B cell (primary cell): ENCODE measurements at regions of chr1 and their contacts with region 1.

Region 1: GRCh38 chr1:64906447-64906846 is 59.9 kb downstream of the JAK1 start:
- DNase-seq: no peak
- ATAC-seq: no peak
- H3K4me3 ChIP-seq: no peak overlapping the region
- H3K4me3 Mint-ChIP-seq: peak overlapping the region; percentile 4
- H3K27ac ChIP-seq: no peak overlapping the region
- H3K27ac Mint-ChIP-seq: peak overlapping the region; percentile 34
- H3K4me1 ChIP-seq: peaks cover 30 to 50% of the 10 kb centered on the region in 2 donors
- H3K4me1 Mint-ChIP-seq: peaks cover 87% of the 10 kb centered on the region
- H3K27me3 ChIP-seq: no peaks in the 10 kb centered on the region
- H3K27me3 Mint-ChIP-seq: no peaks in the 10 kb centered on the region
- CTCF ChIP-seq: no peak

Region 2: DNA sequence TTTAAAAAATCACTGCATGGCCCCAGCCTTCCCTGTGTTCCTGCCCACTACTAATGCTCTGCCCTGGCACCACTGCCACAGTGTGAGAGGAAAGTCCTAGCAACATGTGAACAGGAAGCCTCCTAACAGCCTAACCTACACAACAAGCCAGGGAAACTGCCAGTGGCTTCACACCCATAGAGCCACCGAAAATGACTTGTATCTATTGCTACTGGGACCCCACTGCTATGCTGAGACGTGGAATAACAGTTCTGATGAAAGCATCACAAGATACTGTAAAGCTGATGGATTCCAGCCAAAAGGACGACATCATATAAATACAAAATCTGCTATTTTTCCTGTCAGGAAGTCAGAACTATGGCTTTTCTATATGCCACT is 15.0 kb before region 1 on chr1:
- CTCF ChIA-PET with region 1: interaction called, 3 read pairs
- POLR2A ChIA-PET with region 1: no interaction called
- intact Hi-C with region 1: loop called (anchors 1 kb)
- DNase-seq: no peak
- ATAC-seq: no peak
- H3K4me3 ChIP-seq: no peak overlapping the region
- H3K4me3 Mint-ChIP-seq: peak overlapping the region; percentile 54
- H3K27ac ChIP-seq: no peak overlapping the region
- H3K27ac Mint-ChIP-seq: no peak overlapping the region
- H3K4me1 ChIP-seq: peaks cover 63 to 86% of the 10 kb centered on the region in 2 donors
- H3K4me1 Mint-ChIP-seq: peaks cover 91% of the 10 kb centered on the region
- H3K27me3 ChIP-seq: no peaks in the 10 kb centered on the region
- H3K27me3 Mint-ChIP-seq: no peaks in the 10 kb centered on the region
- CTCF ChIP-seq: no peak

Region 3: DNA sequence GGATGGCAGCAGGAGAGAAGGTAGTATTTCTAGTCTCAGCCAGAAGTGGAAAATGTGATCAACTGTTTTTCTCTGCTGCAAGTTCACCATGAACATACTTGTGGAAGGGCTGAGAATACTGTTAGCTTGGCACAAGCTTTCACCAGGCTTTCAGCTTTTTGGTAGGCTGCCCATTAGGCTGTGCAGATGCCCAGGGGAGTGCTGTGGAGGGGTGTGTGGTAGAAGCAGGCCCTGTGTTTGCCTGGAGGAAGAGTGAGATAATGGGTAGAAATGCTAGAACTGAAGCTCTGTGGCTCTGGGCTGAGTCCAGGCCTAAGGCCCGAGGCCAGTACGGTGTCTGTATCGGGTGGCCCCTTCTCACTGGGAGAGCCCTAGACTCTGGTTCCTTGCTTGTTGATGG is 412.7 kb after region 1 on chr1:
- CTCF ChIA-PET with region 1: no interaction called
- POLR2A ChIA-PET with region 1: no interaction called
- intact Hi-C with region 1: no loop called
- DNase-seq: no peak
- ATAC-seq: no peak
- H3K4me3 ChIP-seq: no peak overlapping the region
- H3K4me3 Mint-ChIP-seq: no peak overlapping the region
- H3K27ac ChIP-seq: no peak overlapping the region
- H3K27ac Mint-ChIP-seq: no peak overlapping the region
- H3K4me1 ChIP-seq: no peaks in the 10 kb centered on the region
- H3K4me1 Mint-ChIP-seq: no peaks in the 10 kb centered on the region
- H3K27me3 ChIP-seq: peaks cover 0 to 2% (median 0%) of the 10 kb centered on the region in 4 experiments
- H3K27me3 Mint-ChIP-seq: peaks cover 23% of the 10 kb centered on the region
- CTCF ChIP-seq: no peak